Naive thymus-derived CD4-positive, alpha-beta T cell (primary cell): ENCODE measurements at regions of chr2 and their contacts with region 1.

Region 1: DNA sequence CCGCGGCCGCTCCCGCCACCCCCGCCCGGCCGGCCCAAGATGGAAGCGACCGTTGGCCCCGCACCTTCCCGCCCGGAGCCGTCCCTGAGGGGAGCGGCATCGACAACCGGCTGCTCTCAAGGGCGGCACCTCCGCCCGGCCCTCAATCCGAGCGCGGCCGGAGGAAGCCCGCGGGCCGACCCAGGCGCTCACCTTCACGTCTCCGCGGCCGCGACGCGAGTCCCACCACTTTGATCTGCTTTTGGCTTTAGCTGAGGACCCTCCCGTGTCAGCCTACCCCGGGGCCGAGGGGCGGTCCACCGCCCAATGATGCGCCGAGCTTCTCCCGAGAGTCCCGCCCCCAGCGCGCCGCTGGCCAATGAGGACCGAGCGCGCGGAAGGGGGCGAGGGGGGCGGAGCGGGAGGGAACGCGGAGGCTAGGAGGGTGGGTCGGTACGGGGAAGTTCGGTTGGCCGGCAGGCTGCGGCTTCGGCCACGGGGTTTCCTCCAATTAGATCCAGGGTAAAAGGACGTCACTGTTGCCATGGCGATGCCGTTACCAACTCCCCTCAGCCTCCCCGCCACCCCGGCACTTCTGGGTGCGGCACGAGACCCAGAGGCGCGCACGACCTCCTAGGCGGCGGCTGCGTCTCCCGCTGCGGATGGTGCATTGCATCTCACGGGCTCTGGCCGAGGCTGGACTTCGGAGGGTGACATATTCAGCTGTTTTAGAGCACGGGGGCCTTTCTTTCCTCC is at the start of gene YWHAQ:
- DNase-seq: peak; percentile 92 to 98 (median 96)
- ATAC-seq: peak; percentile 95
- H3K4me3 ChIP-seq: peak within 1 kb of the TSS; percentile 75
- H3K4me3 Mint-ChIP-seq: peak within 1 kb of the TSS; percentile 90 to 99 (median 96)
- H3K27ac ChIP-seq: peak within 1 kb of the TSS; percentile 94
- H3K27ac Mint-ChIP-seq: peak within 1 kb of the TSS; percentile 78 to 97 (median 94)
- H3K4me1 ChIP-seq: peaks cover 13 to 22% of the 10 kb centered on the region in 2 donors
- H3K4me1 Mint-ChIP-seq: peaks cover 39 to 52% (median 51%) of the 10 kb centered on the region in 7 donors
- H3K27me3 ChIP-seq: no peaks in the 10 kb centered on the region
- H3K27me3 Mint-ChIP-seq: peaks cover 0 to 15% (median 0%) of the 10 kb centered on the region in 5 donors
- total RNA-seq, gene YWHAQ: 67.3 to 189 (median 83.3) TPM

Region 2: DNA sequence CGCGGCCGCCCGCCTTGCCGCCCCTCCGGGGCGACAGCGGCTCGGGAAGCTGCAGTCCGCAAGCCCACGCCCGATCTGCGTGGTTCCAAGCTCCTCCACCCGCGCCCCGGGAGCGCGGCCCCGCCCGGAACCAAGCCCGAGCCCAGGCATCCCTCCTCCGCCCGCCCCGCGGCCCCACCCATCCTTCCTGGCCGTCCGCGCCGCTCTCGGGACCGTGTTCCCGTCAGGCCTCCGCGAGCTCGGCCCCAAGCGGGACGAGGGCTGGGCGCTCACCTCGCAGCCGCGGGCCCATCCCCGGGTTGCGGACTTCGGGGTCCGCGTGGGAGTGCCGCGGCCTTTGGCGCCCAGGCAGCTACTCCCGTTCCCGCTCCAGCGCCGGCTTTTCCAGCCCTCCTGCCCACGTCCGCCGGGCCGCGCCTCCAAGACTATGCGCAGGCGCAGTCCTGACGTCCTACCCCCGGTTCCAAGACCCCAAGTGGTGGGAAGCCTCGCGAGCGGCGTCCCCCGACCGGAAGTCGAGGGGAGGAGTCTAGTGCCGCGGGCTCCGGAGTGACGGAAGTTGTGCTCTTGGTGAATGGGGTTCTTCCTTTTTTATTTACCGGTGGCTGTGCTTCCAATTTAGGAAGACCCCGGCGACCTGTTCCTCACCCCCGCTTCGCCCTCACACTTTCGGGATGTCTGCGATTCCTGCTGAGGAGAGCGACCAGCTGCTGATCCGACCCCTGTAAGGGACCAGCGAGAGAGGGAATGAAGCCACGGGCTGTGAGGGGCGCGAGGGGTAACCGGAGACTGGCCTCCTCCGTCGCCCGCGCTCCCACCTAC is 207.6 kb before region 1 on chr2 and contains the starts of genes CPSF3 and ITGB1BP1:
- CTCF ChIA-PET with region 1: no interaction called
- POLR2A ChIA-PET with region 1: no interaction called
- intact Hi-C with region 1: loop called (anchors 1 kb)
- DNase-seq: peak; percentile 88 to 98 (median 94)
- ATAC-seq: peak; percentile 92
- H3K4me3 ChIP-seq: peak within 1 kb of the TSS; percentile 90
- H3K4me3 Mint-ChIP-seq: peak within 1 kb of the TSS in 5 of 10 donors; percentile 87 to 95 (median 92)
- H3K27ac ChIP-seq: peak within 1 kb of the TSS; percentile 84
- H3K27ac Mint-ChIP-seq: peak within 1 kb of the TSS in 8 of 9 donors; percentile 82 to 97 (median 92)
- H3K4me1 ChIP-seq: peaks cover 22 to 24% of the 10 kb centered on the region in 2 donors
- H3K4me1 Mint-ChIP-seq: peaks cover 20 to 41% (median 28%) of the 10 kb centered on the region in 7 donors
- H3K27me3 ChIP-seq: no peaks in the 10 kb centered on the region
- H3K27me3 Mint-ChIP-seq: no peaks in the 10 kb centered on the region
- total RNA-seq, gene CPSF3: 18.0 to 47.8 (median 21.7) TPM
- total RNA-seq, gene ITGB1BP1: 45.1 to 107 (median 54.3) TPM

Region 3: GRCh38 chr2:9613291-9613690 is 17.6 kb before region 1 on chr2:
- CTCF ChIA-PET with region 1: no interaction called
- POLR2A ChIA-PET with region 1: interaction called, 16 read pairs
- intact Hi-C with region 1: loop called (anchors 1 kb)
- DNase-seq: no peak
- ATAC-seq: no peak
- H3K4me3 ChIP-seq: no peak overlapping the region
- H3K4me3 Mint-ChIP-seq: no peak overlapping the region
- H3K27ac ChIP-seq: no peak overlapping the region
- H3K27ac Mint-ChIP-seq: no peak overlapping the region
- H3K4me1 ChIP-seq: peaks cover 12 to 30% of the 10 kb centered on the region in 2 donors
- H3K4me1 Mint-ChIP-seq: peaks cover 57 to 97% (median 89%) of the 10 kb centered on the region in 7 donors
- H3K27me3 ChIP-seq: no peaks in the 10 kb centered on the region
- H3K27me3 Mint-ChIP-seq: no peaks in the 10 kb centered on the region

Region 4: DNA sequence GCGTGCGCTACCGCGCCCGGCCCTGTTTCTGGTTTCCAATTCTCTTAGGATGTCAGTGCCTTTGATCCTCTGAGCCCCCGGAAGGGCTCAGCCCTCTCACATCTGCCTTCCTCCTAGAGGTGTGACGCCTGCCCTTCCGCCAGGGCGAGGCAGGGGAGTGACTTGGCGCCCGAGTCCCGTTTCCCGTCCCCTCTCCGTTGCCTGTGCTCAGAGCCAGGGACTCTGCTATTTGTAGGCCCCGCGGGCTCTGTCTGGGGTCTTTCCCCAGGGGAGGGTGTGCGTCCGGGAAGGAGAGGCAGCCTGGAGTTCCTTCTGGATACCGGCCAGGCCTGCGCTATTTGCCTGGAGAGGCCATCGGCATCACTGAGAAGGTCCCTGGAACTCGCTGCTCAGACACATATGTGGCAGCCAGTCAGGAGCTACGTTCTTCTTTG is 108.6 kb after region 1 on chr2:
- CTCF ChIA-PET with region 1: no interaction called
- POLR2A ChIA-PET with region 1: no interaction called
- intact Hi-C with region 1: loop called (anchors 1 to 2 kb)
- DNase-seq: peak in 7 of 9 donors; percentile 18 to 53 (median 36)
- ATAC-seq: peak; percentile 70
- H3K4me3 ChIP-seq: peak overlapping the region; percentile 45
- H3K4me3 Mint-ChIP-seq: peak overlapping the region; percentile 75 to 94 (median 86)
- H3K27ac ChIP-seq: peak overlapping the region; percentile 32
- H3K27ac Mint-ChIP-seq: peak overlapping the region; percentile 77 to 96 (median 92)
- H3K4me1 ChIP-seq: peaks cover 32 to 42% of the 10 kb centered on the region in 2 donors
- H3K4me1 Mint-ChIP-seq: peaks cover 32 to 58% (median 41%) of the 10 kb centered on the region in 7 donors
- H3K27me3 ChIP-seq: no peaks in the 10 kb centered on the region
- H3K27me3 Mint-ChIP-seq: peaks cover 0 to 5% (median 0%) of the 10 kb centered on the region in 5 donors

Region 5: DNA sequence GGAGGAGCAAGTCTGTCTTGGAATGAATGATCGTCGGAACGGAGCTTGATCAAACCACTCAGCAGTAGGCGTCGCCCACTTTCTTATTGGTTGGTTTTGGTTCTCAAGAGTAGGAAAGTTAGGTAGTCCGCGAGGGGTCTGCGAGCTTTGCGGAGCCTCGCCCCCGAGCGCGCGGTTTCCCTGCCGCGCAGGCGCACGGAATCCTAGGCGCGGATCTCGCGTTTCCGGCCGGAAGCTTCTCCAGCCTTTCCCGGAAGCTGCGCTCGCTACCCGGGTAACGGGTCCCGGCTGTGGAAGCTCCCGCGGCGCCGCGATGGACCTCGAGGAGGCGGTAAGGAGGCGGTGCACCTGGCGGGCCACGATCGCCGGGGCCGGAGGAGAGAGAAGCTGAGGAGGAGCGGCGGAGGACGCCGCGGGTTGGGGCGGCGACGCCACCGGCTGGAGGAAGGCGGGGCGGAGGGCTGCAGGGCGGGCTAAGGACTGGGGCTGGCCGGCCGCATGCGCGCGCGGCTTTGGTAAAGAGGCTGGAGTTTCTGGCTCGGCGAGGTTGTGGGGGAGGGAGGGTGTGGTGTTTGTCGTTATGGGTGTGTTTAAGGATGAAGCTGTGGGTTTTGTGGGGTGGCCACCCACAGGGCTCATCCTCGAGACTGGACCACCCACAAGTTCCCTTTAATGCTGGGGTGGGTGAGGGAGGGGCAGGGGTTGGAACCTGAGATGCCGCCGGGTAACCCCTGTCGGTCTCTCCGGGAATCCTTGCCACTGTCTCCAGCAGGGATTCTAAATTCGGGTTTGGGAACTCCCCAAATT is 212.5 kb after region 1 on chr2 and contains the start of gene TAF1B:
- CTCF ChIA-PET with region 1: no interaction called
- POLR2A ChIA-PET with region 1: interaction called, 5 read pairs
- intact Hi-C with region 1: loop called in 1 of 2 experiments (anchors 1 kb)
- DNase-seq: peak; percentile 55 to 89 (median 80)
- ATAC-seq: peak; percentile 87
- H3K4me3 ChIP-seq: peak within 1 kb of the TSS; percentile 85
- H3K4me3 Mint-ChIP-seq: peak within 1 kb of the TSS; percentile 89 to 95 (median 93)
- H3K27ac ChIP-seq: peak within 1 kb of the TSS; percentile 72
- H3K27ac Mint-ChIP-seq: peak within 1 kb of the TSS; percentile 74 to 97 (median 92)
- H3K4me1 ChIP-seq: peaks cover 11 to 13% of the 10 kb centered on the region in 2 donors
- H3K4me1 Mint-ChIP-seq: peaks cover 25 to 56% (median 48%) of the 10 kb centered on the region in 7 donors
- H3K27me3 ChIP-seq: no peaks in the 10 kb centered on the region
- H3K27me3 Mint-ChIP-seq: peaks cover 0 to 6% (median 0%) of the 10 kb centered on the region in 5 donors
- total RNA-seq, gene TAF1B: 9.2 to 28.2 (median 20.9) TPM

Region 6: DNA sequence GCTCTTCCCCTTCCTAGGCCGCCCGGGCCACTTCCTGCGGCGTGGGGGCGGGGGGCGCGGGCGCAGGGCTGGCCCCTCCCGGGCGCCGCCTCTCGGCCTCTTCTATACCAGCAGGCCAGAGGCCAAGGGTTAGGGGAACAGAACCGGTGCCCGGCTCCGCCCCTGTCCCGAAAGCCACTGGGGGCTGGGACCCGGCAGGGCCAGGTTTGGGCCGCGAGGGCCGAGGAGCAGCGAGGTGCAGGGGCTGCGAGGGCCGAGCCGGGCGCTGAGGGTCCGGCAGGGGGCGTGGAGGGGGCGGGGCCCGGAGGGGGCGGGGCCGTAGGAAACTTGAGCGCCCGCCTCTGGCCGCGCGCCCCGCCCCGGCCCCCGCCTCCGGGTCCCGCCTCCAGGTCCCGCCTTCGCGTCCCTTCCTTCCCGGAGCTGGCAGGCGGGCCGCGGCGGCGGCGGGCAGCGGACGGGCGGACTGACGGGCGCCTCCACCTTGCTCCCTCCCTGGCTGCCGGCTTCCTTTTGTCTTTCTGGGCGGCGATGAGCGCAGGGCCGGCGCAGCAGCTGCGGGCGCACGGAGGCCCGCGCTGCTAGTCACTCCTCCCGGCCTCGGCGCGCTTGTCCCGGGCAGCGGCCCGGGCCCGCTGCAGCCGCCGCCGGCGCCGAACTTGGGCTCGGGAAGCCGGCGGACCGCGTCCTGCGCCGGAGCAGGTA is 671.7 kb after region 1 on chr2 and contains the start of gene HPCAL1:
- CTCF ChIA-PET with region 1: no interaction called
- POLR2A ChIA-PET with region 1: interaction called, 3 read pairs
- intact Hi-C with region 1: loop called in 1 of 2 experiments (anchors 5 kb)
- DNase-seq: peak; percentile 69 to 90 (median 84)
- ATAC-seq: peak; percentile 85
- H3K4me3 ChIP-seq: peak within 1 kb of the TSS; percentile 72
- H3K4me3 Mint-ChIP-seq: peak within 1 kb of the TSS; percentile 89 to 100 (median 99)
- H3K27ac ChIP-seq: peak within 1 kb of the TSS; percentile 78
- H3K27ac Mint-ChIP-seq: peak within 1 kb of the TSS; percentile 85 to 97 (median 94)
- H3K4me1 ChIP-seq: peaks cover 42 to 62% of the 10 kb centered on the region in 2 donors
- H3K4me1 Mint-ChIP-seq: peaks cover 46 to 77% (median 66%) of the 10 kb centered on the region in 7 donors
- H3K27me3 ChIP-seq: no peaks in the 10 kb centered on the region
- H3K27me3 Mint-ChIP-seq: no peaks in the 10 kb centered on the region
- total RNA-seq, gene HPCAL1: 44.9 to 90.5 (median 65.8) TPM